Vagina (tissue), 2 donors: ENCODE measurements at regions of chr16 and their contacts with region 1.

Region 1: GRCh38 chr16:57045694-57046381 is 46.5 kb upstream of the CPNE2 start:
- DNase-seq: no peak
- H3K4me3 ChIP-seq: no peak overlapping the region
- H3K27ac ChIP-seq: peak overlapping the region; percentile 20
- H3K4me1 ChIP-seq: no peaks in the 10 kb centered on the region
- H3K27me3 ChIP-seq: no peaks in the 10 kb centered on the region
- CTCF ChIP-seq: peak in 1 of 3 experiments; percentile 41
- POLR2A ChIP-seq: no peak

Region 2: GRCh38 chr16:56866943-56867830 is 178.7 kb before region 1 on chr16:
- intact Hi-C with region 1: loop called (anchors 10 kb)
- DNase-seq: no peak
- H3K4me3 ChIP-seq: no peak overlapping the region
- H3K27ac ChIP-seq: no peak overlapping the region
- H3K4me1 ChIP-seq: no peaks in the 10 kb centered on the region
- H3K27me3 ChIP-seq: no peaks in the 10 kb centered on the region
- CTCF ChIP-seq: peak; percentile 70 to 75 (median 73)
- POLR2A ChIP-seq: no peak